Ovary (tissue), 10 donors: ENCODE measurements at regions of chr11 and their contacts with region 1.

Region 1: DNA sequence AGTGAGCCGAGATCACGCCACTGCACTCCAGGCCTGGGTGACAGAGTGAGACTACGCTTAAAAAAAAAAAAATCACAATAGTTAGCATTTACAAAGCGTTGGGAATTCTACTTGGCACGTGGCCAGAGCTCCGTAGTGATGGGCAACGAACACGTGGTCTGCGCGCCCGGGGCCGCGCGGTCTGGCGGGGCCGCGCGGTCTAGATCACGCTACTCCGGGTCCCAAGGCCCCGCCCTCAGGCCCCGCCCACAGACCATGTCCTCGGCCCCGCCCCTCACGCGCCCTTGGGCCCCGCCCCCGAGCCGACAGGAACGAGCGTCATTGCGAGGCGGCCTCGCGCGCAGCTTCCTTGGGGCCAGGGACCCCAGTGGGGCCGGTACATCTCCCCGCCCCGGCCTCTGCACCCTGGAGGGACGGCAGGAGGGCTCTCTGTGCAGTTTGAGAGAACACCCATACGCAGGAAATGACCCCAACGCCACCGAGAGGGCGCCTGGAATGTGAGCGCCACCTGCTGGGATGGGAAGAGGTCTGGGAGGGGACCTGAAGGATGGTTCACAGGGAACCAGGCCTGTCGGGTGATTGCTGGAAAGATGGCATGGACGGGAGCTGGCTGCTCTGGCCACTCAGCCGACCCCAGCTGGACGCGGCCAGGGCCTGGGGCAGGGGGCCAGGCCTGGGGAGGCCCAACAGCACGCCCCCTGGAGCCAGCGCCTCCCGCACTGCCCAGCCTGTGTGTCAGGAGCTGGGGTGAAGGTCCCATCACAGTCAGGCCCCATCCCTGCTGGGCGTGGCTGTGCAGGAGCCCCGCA is 2.0 kb upstream of the PTDSS2 start:
- DNase-seq: peak; percentile 95 to 98 (median 98)
- H3K4me3 ChIP-seq: peak overlapping the region; percentile 71
- H3K27ac ChIP-seq: peak overlapping the region; percentile 73 to 84
- H3K4me1 ChIP-seq: peaks cover 2% of the 10 kb centered on the region
- H3K27me3 ChIP-seq: no peaks in the 10 kb centered on the region
- CTCF ChIP-seq: peak; percentile 72 to 94 (median 90)
- EP300 ChIP-seq: no peak
- POLR2A ChIP-seq: peak; percentile 90

Region 2: GRCh38 chr11:236774-237767 is 211.1 kb before region 1 on chr11 and contains the start of gene PSMD13:
- intact Hi-C with region 1: loop called in 1 of 4 experiments (anchors 5 kb)
- DNase-seq: peak; percentile 80 to 90 (median 83)
- H3K4me3 ChIP-seq: peak within 1 kb of the TSS; percentile 88
- H3K27ac ChIP-seq: peak within 1 kb of the TSS; percentile 57 to 90
- H3K4me1 ChIP-seq: peaks cover 8% of the 10 kb centered on the region
- H3K27me3 ChIP-seq: no peaks in the 10 kb centered on the region
- CTCF ChIP-seq: peak in 1 of 3 donors; percentile 35
- EP300 ChIP-seq: no peak
- POLR2A ChIP-seq: peak; percentile 58
- total RNA-seq, gene PSMD13: 66.2 to 80.1 (median 75.8) TPM

Region 3: GRCh38 chr11:304915-305843 is 142.9 kb before region 1 on chr11:
- intact Hi-C with region 1: loop called in 1 of 4 experiments (anchors 5 kb)
- DNase-seq: peak; percentile 74 to 90 (median 83)
- H3K4me3 ChIP-seq: no peak overlapping the region
- H3K27ac ChIP-seq: no peak overlapping the region
- H3K4me1 ChIP-seq: peaks cover 8% of the 10 kb centered on the region
- H3K27me3 ChIP-seq: no peaks in the 10 kb centered on the region
- CTCF ChIP-seq: peak; percentile 49 to 85 (median 82)
- EP300 ChIP-seq: no peak
- POLR2A ChIP-seq: peak; percentile 13

Region 4: DNA sequence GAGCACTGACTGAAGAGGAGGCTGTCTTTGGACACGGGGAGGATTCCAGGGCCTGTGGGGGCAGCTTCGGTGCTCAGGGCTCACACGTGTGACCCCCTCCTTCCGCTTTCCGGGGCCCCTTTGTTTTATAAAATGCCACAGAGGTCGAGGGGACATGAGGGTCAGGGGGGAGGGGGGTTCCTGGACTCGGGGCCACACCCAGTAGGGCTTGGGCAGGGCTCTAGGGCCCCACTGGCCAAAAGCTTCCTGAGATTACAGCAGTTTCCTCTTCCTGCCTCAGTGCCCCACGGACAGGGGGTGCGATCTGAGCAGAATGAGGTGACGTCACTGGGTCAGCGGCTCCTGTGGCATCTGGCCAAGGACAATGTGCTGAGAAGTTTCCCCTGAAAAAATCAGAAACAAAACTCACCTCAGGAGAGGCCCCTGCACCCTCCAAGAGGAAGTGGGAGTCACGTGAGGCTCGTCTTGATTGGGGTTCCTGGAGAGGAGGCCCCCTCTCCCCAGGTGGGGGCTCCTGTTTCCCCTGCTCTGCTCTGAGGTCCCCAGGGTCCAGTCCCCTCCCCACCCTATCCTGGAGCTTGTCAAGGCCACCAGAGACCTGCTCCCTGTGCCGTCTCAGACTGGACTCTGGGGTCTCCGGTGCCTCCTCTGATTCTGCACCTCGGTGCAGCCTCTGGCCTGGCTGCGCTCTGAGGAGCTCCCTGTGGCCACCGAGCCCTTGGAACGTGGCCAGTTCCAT is 121.1 kb before region 1 on chr11:
- intact Hi-C with region 1: no loop called
- DNase-seq: peak; percentile 86 to 93 (median 90)
- H3K4me3 ChIP-seq: no peak overlapping the region
- H3K27ac ChIP-seq: peak overlapping the region; percentile 84 to 94
- H3K4me1 ChIP-seq: peaks cover 26% of the 10 kb centered on the region
- H3K27me3 ChIP-seq: no peaks in the 10 kb centered on the region
- CTCF ChIP-seq: no peak
- EP300 ChIP-seq: no peak
- POLR2A ChIP-seq: peak; percentile 14

Region 5: GRCh38 chr11:460331-461199 is 12.4 kb after region 1 on chr11:
- intact Hi-C with region 1: no loop called
- DNase-seq: no peak
- H3K4me3 ChIP-seq: no peak overlapping the region
- H3K27ac ChIP-seq: no peak overlapping the region
- H3K4me1 ChIP-seq: no peaks in the 10 kb centered on the region
- H3K27me3 ChIP-seq: no peaks in the 10 kb centered on the region
- CTCF ChIP-seq: no peak
- EP300 ChIP-seq: no peak
- POLR2A ChIP-seq: no peak

Region 6: GRCh38 chr11:506238-506994 is 58.3 kb after region 1 on chr11:
- intact Hi-C with region 1: loop called in 3 of 4 experiments (anchors 5 to 10 kb)
- DNase-seq: peak; percentile 98 to 99 (median 99)
- H3K4me3 ChIP-seq: peak overlapping the region; percentile 94
- H3K27ac ChIP-seq: peak overlapping the region; percentile 77 to 98
- H3K4me1 ChIP-seq: peaks cover 14% of the 10 kb centered on the region
- H3K27me3 ChIP-seq: no peaks in the 10 kb centered on the region
- CTCF ChIP-seq: peak in 2 of 3 donors; percentile 37 to 38
- EP300 ChIP-seq: peak; percentile 13
- POLR2A ChIP-seq: peak; percentile 68

Region 7: DNA sequence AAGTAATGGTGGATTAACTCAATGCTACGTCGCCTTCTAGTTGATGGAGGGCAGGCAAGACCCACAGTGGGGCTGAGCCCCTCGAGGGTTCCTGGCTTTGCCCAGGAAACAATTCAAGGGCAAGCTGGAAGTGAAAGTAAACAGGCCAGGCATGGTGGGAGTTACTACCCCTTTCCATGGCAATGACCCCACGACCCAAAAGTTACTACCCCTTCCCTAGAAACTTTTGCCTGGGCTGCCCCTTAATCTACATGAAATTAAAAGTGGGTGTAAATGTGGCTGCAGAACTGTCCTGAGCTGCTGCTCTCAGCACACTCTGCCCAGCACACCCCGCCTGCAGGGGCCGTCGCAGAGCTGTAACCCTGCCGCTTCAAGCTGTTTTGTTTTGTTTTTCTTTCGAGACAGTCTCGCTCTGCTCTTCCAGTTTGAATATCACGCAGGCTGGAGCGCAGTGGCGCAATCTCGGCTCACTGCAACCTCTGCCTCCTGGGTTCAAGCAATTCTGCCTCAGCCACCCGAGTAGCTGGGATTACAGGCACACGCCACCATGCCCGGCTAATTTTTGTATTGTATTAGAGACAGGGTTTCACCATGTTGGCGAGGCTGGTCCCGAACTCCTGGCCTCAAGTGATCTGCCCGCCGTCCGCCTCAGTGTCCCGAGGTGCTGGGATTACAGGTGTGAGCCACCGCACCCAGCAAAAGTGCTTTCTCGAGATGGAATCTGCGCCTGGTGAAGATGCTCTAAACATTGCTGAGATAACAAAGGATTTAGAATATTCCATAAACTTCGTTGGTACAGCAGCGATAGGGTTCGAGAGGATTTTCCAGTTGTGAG is 64.9 kb after region 1 on chr11:
- intact Hi-C with region 1: loop called in 3 of 4 experiments (anchors 5 to 10 kb)
- DNase-seq: no peak
- H3K4me3 ChIP-seq: no peak overlapping the region
- H3K27ac ChIP-seq: no peak overlapping the region
- H3K4me1 ChIP-seq: peaks cover 3% of the 10 kb centered on the region
- H3K27me3 ChIP-seq: no peaks in the 10 kb centered on the region
- CTCF ChIP-seq: no peak
- EP300 ChIP-seq: no peak
- POLR2A ChIP-seq: no peak